ENCODE measurements at regions of chr17 and their contacts with region 1.

Region 1: GRCh38 chr17:40113110-40113906 is 8.5 kb upstream of the MSL1 start:
- DNase-seq: peak; percentile 84 to 95 (median 90)
- H3K4me3 ChIP-seq: peak overlapping the region; percentile 58
- H3K4me3 Mint-ChIP-seq: peak overlapping the region; percentile 65 to 92 (median 84)
- H3K27ac ChIP-seq: peak overlapping the region; percentile 58
- H3K27ac Mint-ChIP-seq: peak overlapping the region; percentile 66 to 95 (median 86)
- H3K4me1 ChIP-seq: peaks cover 54% of the 10 kb centered on the region
- H3K4me1 Mint-ChIP-seq: peaks cover 45 to 55% (median 54%) of the 10 kb centered on the region in 3 donors
- H3K27me3 ChIP-seq: no peaks in the 10 kb centered on the region
- H3K27me3 Mint-ChIP-seq: peaks cover 0 to 3% of the 10 kb centered on the region in 2 donors

Region 2: GRCh38 chr17:40068917-40069750 is 44.2 kb before region 1 on chr17:
- CTCF ChIA-PET with region 1: interaction called, 159 read pairs
- POLR2A ChIA-PET with region 1: interaction called, 8 read pairs
- DNase-seq: peak; percentile 55 to 86 (median 66)
- H3K4me3 ChIP-seq: peak overlapping the region; percentile 68
- H3K4me3 Mint-ChIP-seq: peak overlapping the region; percentile 81 to 91 (median 88)
- H3K27ac ChIP-seq: peak overlapping the region; percentile 58
- H3K27ac Mint-ChIP-seq: peak overlapping the region; percentile 88 to 98 (median 96)
- H3K4me1 ChIP-seq: peaks cover 82% of the 10 kb centered on the region
- H3K4me1 Mint-ChIP-seq: peaks cover 62 to 86% (median 69%) of the 10 kb centered on the region in 3 donors
- H3K27me3 ChIP-seq: no peaks in the 10 kb centered on the region
- H3K27me3 Mint-ChIP-seq: no peaks in the 10 kb centered on the region

Region 3: GRCh38 chr17:40086150-40087044 is 26.9 kb before region 1 on chr17:
- CTCF ChIA-PET with region 1: interaction called, 18 read pairs
- POLR2A ChIA-PET with region 1: interaction called, 6 read pairs
- DNase-seq: peak in 4 of 5 donors; percentile 45 to 73 (median 54)
- H3K4me3 ChIP-seq: no peak overlapping the region
- H3K4me3 Mint-ChIP-seq: no peak overlapping the region
- H3K27ac ChIP-seq: no peak overlapping the region
- H3K27ac Mint-ChIP-seq: peak overlapping the region in 6 of 8 donors; percentile 11 to 78 (median 46)
- H3K4me1 ChIP-seq: peaks cover 6% of the 10 kb centered on the region
- H3K4me1 Mint-ChIP-seq: peaks cover 5 to 13% (median 12%) of the 10 kb centered on the region in 3 donors
- H3K27me3 ChIP-seq: no peaks in the 10 kb centered on the region
- H3K27me3 Mint-ChIP-seq: no peaks in the 10 kb centered on the region

Region 4: DNA sequence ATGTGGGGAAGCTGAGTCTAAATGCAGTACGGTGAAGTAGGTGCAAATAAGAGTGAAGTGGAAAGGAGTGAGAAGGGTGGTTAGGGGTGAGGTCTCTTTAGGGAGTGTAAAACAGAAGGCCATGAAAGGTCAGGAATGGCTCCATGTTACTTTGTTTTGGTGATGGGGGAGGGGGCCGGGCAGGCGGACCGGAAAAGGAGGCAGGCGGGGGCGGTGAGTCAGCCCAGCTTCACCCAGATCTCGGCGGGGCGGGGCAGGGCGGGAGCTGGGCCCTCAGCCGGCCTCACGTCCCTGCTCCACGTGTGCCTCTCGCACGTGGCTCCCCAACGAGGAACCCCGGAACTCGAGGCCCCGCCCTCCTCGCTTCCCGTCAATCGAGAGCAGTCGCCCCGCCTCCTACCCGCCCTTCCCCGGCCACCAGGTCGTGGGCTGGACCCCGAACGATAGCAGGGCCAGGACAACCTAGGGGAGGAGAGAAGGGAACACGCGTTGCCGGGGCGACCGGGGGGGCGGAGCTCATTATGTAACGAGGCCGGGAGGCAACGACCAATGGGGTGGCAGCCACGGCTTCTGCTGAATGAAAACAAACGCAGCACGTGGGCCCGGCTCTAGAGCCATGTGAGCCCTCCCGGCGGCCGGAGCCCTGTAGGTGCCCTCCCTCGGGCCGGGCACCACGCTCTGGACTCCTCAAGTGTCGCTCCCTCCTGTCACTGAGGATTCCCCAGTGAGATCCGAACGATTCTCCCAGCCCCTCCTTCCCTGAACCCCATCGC is 14.3 kb before region 1 on chr17:
- CTCF ChIA-PET with region 1: interaction called, 191 read pairs
- POLR2A ChIA-PET with region 1: interaction called, 60 read pairs
- DNase-seq: peak; percentile 99 to 100 (median 99)
- H3K4me3 ChIP-seq: peak overlapping the region; percentile 94
- H3K4me3 Mint-ChIP-seq: peak overlapping the region; percentile 82 to 99 (median 95)
- H3K27ac ChIP-seq: peak overlapping the region; percentile 88
- H3K27ac Mint-ChIP-seq: peak overlapping the region; percentile 81 to 100 (median 95)
- H3K4me1 ChIP-seq: peaks cover 87% of the 10 kb centered on the region
- H3K4me1 Mint-ChIP-seq: peaks cover 78 to 94% (median 86%) of the 10 kb centered on the region in 3 donors
- H3K27me3 ChIP-seq: no peaks in the 10 kb centered on the region
- H3K27me3 Mint-ChIP-seq: peaks cover 0 to under 1% of the 10 kb centered on the region in 2 donors

Region 5: DNA sequence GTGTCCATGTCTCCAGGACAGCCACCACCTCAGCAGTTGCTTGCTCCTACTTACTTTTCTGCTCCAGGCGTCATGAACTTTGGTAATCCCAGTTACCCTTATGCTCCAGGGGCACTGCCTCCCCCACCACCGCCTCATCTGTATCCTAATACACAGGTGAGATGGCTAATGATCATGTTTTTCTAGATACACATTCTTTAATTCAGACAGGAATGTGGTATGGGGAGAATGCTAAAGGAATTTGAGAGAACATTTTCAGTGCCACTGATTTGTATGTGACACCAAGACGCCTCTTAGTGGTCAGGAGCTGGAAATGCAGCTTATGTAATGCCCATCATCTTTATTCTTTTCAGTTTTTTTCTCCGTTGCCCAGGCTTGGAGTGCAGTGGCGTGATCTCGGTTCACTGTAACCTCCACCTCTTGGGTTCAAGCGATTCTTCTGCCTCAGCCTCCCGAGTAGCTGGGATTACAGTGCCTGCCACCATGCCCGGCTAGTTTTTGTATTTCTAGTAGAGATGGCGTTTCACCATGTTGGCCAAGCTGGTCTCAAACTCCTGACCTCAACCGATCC is 55.0 kb after region 1 on chr17:
- CTCF ChIA-PET with region 1: interaction called, 92 read pairs
- POLR2A ChIA-PET with region 1: interaction called, 18 read pairs
- DNase-seq: peak in 4 of 5 donors; percentile 13 to 59 (median 56)
- H3K4me3 ChIP-seq: no peak overlapping the region
- H3K4me3 Mint-ChIP-seq: no peak overlapping the region
- H3K27ac ChIP-seq: no peak overlapping the region
- H3K27ac Mint-ChIP-seq: peak overlapping the region; percentile 12 to 96 (median 85)
- H3K4me1 ChIP-seq: no peaks in the 10 kb centered on the region
- H3K4me1 Mint-ChIP-seq: peaks cover 7 to 15% (median 9%) of the 10 kb centered on the region in 3 donors
- H3K27me3 ChIP-seq: no peaks in the 10 kb centered on the region
- H3K27me3 Mint-ChIP-seq: no peaks in the 10 kb centered on the region

Region 6: DNA sequence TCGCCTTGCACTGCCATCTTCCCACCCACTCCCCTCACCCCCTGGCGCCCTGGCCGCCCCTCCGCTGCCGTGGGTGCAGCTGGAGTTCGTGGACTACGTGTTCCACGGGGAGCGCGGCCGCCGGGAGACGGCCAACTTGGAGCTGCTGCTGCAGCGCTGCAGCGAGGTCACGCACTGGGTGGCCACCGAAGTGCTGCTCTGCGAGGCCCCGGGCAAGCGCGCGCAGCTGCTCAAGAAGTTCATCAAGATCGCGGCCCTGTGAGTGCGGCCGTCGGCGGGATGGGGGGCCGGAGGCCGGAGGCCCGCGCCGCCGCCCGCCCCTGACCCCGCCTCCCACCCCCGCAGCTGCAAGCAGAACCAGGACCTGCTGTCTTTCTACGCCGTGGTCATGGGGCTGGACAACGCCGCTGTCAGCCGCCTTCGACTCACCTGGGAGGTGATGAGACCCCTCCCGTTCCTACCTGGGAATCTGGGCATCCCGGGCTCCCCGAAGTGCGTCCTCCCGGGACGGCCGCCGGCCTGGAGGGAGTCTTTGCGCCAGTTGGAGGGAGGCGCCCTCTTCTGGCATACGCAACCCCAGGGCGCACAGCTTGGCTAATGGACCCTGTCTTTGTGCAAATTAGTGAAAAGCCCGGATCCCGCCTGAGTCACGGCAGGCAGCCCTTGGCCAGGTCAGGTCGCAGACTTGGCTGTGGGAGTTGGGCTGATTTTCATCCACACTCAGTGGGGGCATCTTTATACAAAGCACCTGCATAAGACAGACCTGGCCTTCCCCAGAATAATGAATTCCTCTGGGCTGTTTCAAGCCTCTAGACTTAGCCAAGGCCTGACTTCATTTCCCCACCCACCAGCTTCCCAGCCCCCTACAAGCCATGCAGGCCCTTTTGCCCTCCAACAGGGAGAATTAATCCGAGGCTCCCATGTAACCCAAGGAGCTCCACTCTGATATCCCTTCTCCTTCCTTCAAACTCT is 78.2 kb after region 1 on chr17:
- CTCF ChIA-PET with region 1: interaction called, 49 read pairs
- POLR2A ChIA-PET with region 1: interaction called, 4 read pairs
- DNase-seq: peak; percentile 46 to 75 (median 50)
- H3K4me3 ChIP-seq: peak overlapping the region; percentile 62
- H3K4me3 Mint-ChIP-seq: peak overlapping the region; percentile 84 to 97 (median 92)
- H3K27ac ChIP-seq: no peak overlapping the region
- H3K27ac Mint-ChIP-seq: peak overlapping the region in 2 of 8 donors; percentile 68 to 88
- H3K4me1 ChIP-seq: peaks cover 5% of the 10 kb centered on the region
- H3K4me1 Mint-ChIP-seq: peaks cover 5 to 9% (median 6%) of the 10 kb centered on the region in 3 donors
- H3K27me3 ChIP-seq: no peaks in the 10 kb centered on the region
- H3K27me3 Mint-ChIP-seq: peaks cover 0 to 1% of the 10 kb centered on the region in 2 donors

Region 7: GRCh38 chr17:40362696-40363110 is 249.4 kb after region 1 on chr17:
- CTCF ChIA-PET with region 1: no interaction called
- POLR2A ChIA-PET with region 1: no interaction called
- DNase-seq: peak; percentile 52 to 79 (median 65)
- H3K4me3 ChIP-seq: no peak overlapping the region
- H3K4me3 Mint-ChIP-seq: peak overlapping the region; percentile 33 to 81 (median 59)
- H3K27ac ChIP-seq: no peak overlapping the region
- H3K27ac Mint-ChIP-seq: no peak overlapping the region
- H3K4me1 ChIP-seq: peaks cover 11% of the 10 kb centered on the region
- H3K4me1 Mint-ChIP-seq: peaks cover 9 to 22% (median 9%) of the 10 kb centered on the region in 3 donors
- H3K27me3 ChIP-seq: no peaks in the 10 kb centered on the region
- H3K27me3 Mint-ChIP-seq: peaks cover 7 to 17% of the 10 kb centered on the region in 2 donors

Measured in CD8-positive, alpha-beta memory T cell (primary cell).